Right ventricle myocardium inferior (tissue), 1 donor: ENCODE measurements at regions of chr11 and their contacts with region 1.

Region 1: DNA sequence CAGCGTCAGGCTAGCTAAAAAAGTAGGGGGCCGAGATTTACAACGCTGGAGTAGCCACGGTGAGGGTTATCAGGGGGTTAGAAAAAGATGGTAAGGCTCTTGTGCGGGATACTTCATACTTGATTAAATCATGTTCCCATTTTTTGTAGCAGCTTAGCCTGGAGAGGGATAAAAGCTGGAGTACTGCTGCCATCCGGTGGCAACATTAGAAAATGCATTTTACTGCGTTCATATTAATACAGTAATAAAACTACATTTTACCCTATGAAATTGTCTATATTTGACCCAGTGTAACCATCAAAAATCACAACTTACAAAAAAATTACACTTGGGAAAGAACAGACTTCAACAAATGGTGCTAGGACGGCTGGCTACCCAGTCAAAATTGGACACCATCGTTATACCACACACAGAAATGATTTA is 17.3 kb downstream of the RPUSD4 start:
- DNase-seq: no peak
- ATAC-seq: peak; percentile 74

Region 2: GRCh38 chr11:125923012-125923579 is 271.0 kb before region 1 on chr11:
- intact Hi-C with region 1: loop called (anchors 1 kb)
- DNase-seq: no peak
- ATAC-seq: peak; percentile 82

Region 3: DNA sequence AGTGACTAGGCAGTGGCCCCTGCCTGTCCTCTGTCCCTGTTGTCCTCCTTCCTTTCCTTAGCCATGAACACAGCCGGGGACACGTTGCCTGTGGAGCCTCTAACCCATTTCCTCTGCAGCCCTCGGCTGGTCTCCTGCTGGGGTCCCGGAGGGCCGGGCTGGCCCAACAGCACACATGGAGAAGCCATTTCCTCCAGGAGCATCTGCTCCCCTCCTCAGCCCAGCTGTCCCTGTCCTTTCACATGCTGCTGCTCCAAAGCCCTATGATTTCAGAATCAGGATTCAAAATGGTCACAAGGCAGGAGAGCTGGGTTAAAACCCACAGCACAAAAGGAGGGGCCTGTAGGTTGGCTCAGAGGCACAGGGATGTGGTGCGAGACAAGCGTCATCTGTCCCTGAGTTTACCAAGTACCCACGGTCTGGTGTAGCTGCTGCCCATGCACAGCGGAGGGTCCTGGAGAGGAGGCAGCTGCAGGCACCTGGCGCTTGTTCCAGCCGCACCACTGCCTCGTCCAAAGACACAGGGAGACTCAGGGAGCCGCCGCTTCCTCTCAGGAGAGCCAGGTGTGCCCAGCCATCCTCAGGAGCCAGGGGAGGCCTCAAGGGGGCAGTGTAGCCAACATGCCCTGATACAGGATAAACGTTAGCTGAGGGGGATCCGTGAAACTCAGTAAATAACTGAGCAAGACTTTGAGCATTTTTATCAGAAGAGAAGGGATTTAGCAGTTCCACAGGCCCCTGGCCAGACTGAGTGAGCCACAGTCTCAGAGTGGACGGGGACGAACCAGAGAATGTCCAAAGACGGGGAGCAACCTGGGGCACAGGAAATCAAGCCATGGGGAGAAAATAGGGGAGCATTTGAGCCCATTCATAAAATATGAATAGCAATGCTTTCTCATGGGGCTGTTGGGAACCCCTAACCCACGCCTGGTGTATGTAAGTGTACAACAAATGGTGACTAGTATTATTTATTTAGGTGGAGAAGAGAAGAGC is 252.2 kb before region 1 on chr11:
- intact Hi-C with region 1: loop called (anchors 5 kb)
- DNase-seq: no peak
- ATAC-seq: peak; percentile 74

Region 4: DNA sequence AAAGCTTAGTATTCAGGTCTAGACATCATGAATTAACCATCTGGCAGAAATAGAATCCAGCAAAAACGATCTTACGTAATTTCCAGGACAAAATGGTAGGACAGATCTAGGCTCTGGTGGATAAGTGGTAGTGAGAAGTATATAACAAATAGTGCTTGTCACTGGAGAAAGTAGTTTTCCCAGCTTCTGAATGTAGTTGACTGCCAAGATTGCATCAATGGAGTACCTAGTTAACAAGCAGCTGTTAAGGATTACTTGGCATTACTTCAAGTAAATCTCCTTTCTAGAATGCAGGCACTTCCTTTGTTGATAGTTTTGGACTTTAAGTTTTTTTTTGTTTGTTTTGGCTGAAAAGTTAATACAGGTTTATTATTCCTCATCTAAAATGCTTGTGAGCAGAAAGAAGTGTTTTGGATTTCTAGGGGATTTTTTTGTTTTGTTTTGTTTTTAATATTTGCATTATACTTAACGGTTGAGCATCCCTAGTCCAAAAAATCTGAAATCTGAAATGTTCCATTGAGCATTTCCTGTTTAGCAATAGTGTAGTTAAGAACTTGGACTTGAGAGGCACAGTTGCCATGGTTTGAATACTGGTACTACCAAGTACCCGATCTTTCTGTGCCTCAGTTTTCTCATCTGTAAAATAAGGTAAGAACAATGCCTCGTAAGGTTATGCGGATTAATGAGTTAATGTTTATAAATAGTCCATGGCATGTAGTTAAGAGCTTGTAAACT is 37.8 kb after region 1 on chr11:
- intact Hi-C with region 1: no loop called
- DNase-seq: no peak
- ATAC-seq: no peak